CD4-positive, alpha-beta memory T cell (primary cell): ENCODE measurements at regions of chr19 and their contacts with region 1.

Region 1: DNA sequence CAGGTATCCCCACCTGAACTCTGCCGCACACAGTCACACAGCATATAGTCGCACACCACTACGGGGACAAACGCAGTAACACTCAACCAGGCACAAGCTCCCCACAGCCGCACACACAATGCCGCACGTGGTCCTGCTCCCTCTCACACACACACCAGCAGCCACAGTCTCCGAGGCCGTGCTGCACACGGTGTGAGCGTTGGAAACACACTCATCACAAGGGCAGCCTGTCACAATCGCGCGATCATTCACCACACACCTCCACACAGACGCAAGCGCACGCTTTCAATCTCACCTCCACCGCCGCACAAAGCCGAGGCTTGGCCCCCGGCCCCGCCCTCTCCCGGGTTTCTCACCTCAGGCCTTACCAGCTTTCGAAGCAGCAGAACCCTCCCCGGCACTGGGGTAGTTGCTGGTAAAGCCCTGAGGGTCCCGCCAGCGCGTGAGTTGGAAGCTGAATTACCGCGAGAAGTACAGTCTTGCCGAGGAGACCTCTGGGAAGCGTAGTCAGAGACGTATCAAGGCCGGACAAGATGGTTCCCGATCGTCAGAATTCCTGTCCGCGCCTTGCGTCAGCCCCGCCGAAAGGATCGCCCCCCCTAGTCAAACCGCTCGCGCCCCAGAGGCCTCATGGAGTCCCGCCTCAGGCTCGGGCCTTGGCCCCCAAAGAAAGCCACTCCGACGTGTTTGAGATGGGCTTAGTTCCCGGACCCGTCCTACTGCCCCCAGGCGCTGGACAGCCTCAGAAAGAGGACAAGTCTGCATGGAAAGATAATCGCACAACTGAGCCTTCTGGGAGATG is at the start of gene ZNF566:
- DNase-seq: peak; percentile 94 to 98 (median 96)
- H3K4me3 ChIP-seq: peak within 1 kb of the TSS; percentile 92 to 99
- H3K4me3 Mint-ChIP-seq: peak within 1 kb of the TSS; percentile 97 to 100 (median 98)
- H3K27ac ChIP-seq: peak within 1 kb of the TSS; percentile 93
- H3K27ac Mint-ChIP-seq: peak within 1 kb of the TSS; percentile 98 to 99 (median 98)
- H3K4me1 ChIP-seq: peaks cover 24% of the 10 kb centered on the region
- H3K4me1 Mint-ChIP-seq: peaks cover 22 to 36% (median 28%) of the 10 kb centered on the region in 4 donors
- H3K27me3 ChIP-seq: no peaks in the 10 kb centered on the region
- H3K27me3 Mint-ChIP-seq: no peaks in the 10 kb centered on the region
- total RNA-seq, gene ZNF566: 25.9 to 30.6 TPM

Region 2: GRCh38 chr19:36132489-36132891 is 356.8 kb before region 1 on chr19:
- CTCF ChIA-PET with region 1: interaction called, 3 read pairs
- POLR2A ChIA-PET with region 1: interaction called, 4 read pairs
- intact Hi-C with region 1: loop called (anchors 2 kb)
- DNase-seq: peak in 2 of 5 donors; percentile 14 to 54
- H3K4me3 ChIP-seq: no peak overlapping the region
- H3K4me3 Mint-ChIP-seq: peak overlapping the region in 4 of 8 donors; percentile 40 to 59 (median 54)
- H3K27ac ChIP-seq: no peak overlapping the region
- H3K27ac Mint-ChIP-seq: peak overlapping the region; percentile 29 to 86 (median 78)
- H3K4me1 ChIP-seq: peaks cover 32% of the 10 kb centered on the region
- H3K4me1 Mint-ChIP-seq: peaks cover 15 to 50% (median 29%) of the 10 kb centered on the region in 4 donors
- H3K27me3 ChIP-seq: no peaks in the 10 kb centered on the region
- H3K27me3 Mint-ChIP-seq: no peaks in the 10 kb centered on the region

Region 3: GRCh38 chr19:36378625-36379509 is 110.5 kb before region 1 on chr19 and contains the start of gene ZFP14:
- CTCF ChIA-PET with region 1: interaction called, 3 read pairs
- POLR2A ChIA-PET with region 1: interaction called, 15 read pairs
- intact Hi-C with region 1: loop called (anchors 1 kb)
- DNase-seq: peak; percentile 92 to 96 (median 95)
- H3K4me3 ChIP-seq: peak within 1 kb of the TSS; percentile 76 to 87
- H3K4me3 Mint-ChIP-seq: peak within 1 kb of the TSS; percentile 87 to 96 (median 94)
- H3K27ac ChIP-seq: peak within 1 kb of the TSS; percentile 76
- H3K27ac Mint-ChIP-seq: peak within 1 kb of the TSS; percentile 81 to 97 (median 93)
- H3K4me1 ChIP-seq: peaks cover 18% of the 10 kb centered on the region
- H3K4me1 Mint-ChIP-seq: peaks cover 13 to 34% (median 18%) of the 10 kb centered on the region in 4 donors
- H3K27me3 ChIP-seq: no peaks in the 10 kb centered on the region
- H3K27me3 Mint-ChIP-seq: no peaks in the 10 kb centered on the region
- total RNA-seq, gene ZFP14: 20.7 to 21.2 TPM

Region 4: DNA sequence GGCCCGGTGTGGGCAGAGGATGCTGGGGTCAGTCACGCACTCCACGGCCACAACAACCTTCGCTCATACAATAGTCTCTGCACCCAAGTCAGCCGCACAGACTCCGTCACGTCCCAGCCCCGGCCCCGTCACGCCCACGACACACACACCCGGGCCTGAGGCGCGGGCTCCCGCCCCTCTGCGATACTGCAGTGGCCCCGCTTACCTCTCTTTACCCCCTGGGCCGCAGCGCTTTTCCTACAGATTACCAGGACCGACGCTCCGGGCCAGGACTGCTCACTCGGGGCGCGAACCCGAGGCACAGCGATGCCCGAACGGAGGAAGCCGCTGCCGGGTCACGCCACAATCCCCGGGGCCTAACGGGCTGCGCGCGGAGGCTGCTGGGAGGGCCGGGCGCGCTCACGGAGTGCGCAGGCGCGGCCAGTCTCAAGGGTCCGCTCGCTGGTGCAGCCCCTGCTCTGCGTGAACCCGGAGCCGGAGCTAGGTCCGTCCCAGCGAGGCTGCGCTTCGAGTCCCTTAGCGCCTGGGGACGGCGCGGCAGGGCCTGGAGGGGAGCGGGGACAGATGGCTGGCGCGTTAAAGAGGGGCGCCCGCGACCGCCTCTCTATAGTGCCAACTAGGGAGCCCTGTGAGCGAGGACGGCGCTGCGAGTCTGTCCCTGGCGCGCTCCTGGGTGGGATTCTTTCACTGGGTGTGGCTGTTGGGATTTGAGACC is 70.9 kb before region 1 on chr19 and contains the start of gene ZFP82:
- CTCF ChIA-PET with region 1: interaction called, 4 read pairs
- POLR2A ChIA-PET with region 1: interaction called, 3 read pairs
- intact Hi-C with region 1: loop called (anchors 1 kb)
- DNase-seq: peak; percentile 47 to 81 (median 76)
- H3K4me3 ChIP-seq: peak within 1 kb of the TSS; percentile 71 to 82
- H3K4me3 Mint-ChIP-seq: peak within 1 kb of the TSS; percentile 81 to 93 (median 92)
- H3K27ac ChIP-seq: peak within 1 kb of the TSS; percentile 73
- H3K27ac Mint-ChIP-seq: peak within 1 kb of the TSS; percentile 78 to 97 (median 96)
- H3K4me1 ChIP-seq: peaks cover 15% of the 10 kb centered on the region
- H3K4me1 Mint-ChIP-seq: peaks cover 11 to 28% (median 20%) of the 10 kb centered on the region in 4 donors
- H3K27me3 ChIP-seq: no peaks in the 10 kb centered on the region
- H3K27me3 Mint-ChIP-seq: peaks cover 9 to 19% of the 10 kb centered on the region in 2 donors
- total RNA-seq, gene ZFP82: 8.2 to 8.6 TPM

Region 5: DNA sequence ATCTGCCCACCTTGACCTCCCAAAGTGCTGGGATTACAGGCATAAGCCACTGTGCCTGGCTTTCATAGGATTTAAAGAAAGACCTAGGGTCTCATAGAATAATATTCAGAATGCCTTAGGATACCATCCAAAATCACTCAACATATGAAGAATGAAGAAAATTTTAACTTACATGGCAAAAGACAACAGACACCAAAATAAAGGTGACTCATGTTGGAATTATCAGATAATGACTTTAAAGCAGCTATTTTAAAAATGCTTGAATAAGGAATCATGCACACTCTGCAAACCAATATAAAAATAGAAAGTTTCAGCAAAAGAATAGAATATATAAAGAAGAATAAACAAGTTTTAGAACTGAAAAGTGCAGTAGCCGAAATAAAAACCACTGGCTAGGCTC is 29.3 kb before region 1 on chr19:
- CTCF ChIA-PET with region 1: no interaction called
- POLR2A ChIA-PET with region 1: no interaction called
- intact Hi-C with region 1: no loop called
- DNase-seq: no peak
- H3K4me3 ChIP-seq: no peak overlapping the region
- H3K4me3 Mint-ChIP-seq: no peak overlapping the region
- H3K27ac ChIP-seq: no peak overlapping the region
- H3K27ac Mint-ChIP-seq: no peak overlapping the region
- H3K4me1 ChIP-seq: no peaks in the 10 kb centered on the region
- H3K4me1 Mint-ChIP-seq: no peaks in the 10 kb centered on the region
- H3K27me3 ChIP-seq: no peaks in the 10 kb centered on the region
- H3K27me3 Mint-ChIP-seq: no peaks in the 10 kb centered on the region

Region 6: GRCh38 chr19:36573020-36573885 is 83.9 kb after region 1 on chr19 and contains the start of gene ZNF529:
- CTCF ChIA-PET with region 1: no interaction called
- POLR2A ChIA-PET with region 1: interaction called, 21 read pairs
- intact Hi-C with region 1: loop called (anchors 1 kb)
- DNase-seq: peak; percentile 86 to 98 (median 89)
- H3K4me3 ChIP-seq: peak within 1 kb of the TSS; percentile 70 to 86
- H3K4me3 Mint-ChIP-seq: peak within 1 kb of the TSS; percentile 89 to 98 (median 96)
- H3K27ac ChIP-seq: peak within 1 kb of the TSS; percentile 95
- H3K27ac Mint-ChIP-seq: peak within 1 kb of the TSS; percentile 93 to 100 (median 98)
- H3K4me1 ChIP-seq: peaks cover 22% of the 10 kb centered on the region
- H3K4me1 Mint-ChIP-seq: peaks cover 25 to 39% (median 34%) of the 10 kb centered on the region in 4 donors
- H3K27me3 ChIP-seq: no peaks in the 10 kb centered on the region
- H3K27me3 Mint-ChIP-seq: no peaks in the 10 kb centered on the region
- total RNA-seq, gene ZNF529: 32.8 to 33.5 TPM

Region 7: GRCh38 chr19:36652958-36653357 is 163.6 kb after region 1 on chr19:
- CTCF ChIA-PET with region 1: no interaction called
- POLR2A ChIA-PET with region 1: no interaction called
- intact Hi-C with region 1: no loop called
- DNase-seq: no peak
- H3K4me3 ChIP-seq: no peak overlapping the region
- H3K4me3 Mint-ChIP-seq: no peak overlapping the region
- H3K27ac ChIP-seq: no peak overlapping the region
- H3K27ac Mint-ChIP-seq: peak overlapping the region in 1 of 7 donors; percentile 42
- H3K4me1 ChIP-seq: no peaks in the 10 kb centered on the region
- H3K4me1 Mint-ChIP-seq: no peaks in the 10 kb centered on the region
- H3K27me3 ChIP-seq: no peaks in the 10 kb centered on the region
- H3K27me3 Mint-ChIP-seq: no peaks in the 10 kb centered on the region

Region 8: DNA sequence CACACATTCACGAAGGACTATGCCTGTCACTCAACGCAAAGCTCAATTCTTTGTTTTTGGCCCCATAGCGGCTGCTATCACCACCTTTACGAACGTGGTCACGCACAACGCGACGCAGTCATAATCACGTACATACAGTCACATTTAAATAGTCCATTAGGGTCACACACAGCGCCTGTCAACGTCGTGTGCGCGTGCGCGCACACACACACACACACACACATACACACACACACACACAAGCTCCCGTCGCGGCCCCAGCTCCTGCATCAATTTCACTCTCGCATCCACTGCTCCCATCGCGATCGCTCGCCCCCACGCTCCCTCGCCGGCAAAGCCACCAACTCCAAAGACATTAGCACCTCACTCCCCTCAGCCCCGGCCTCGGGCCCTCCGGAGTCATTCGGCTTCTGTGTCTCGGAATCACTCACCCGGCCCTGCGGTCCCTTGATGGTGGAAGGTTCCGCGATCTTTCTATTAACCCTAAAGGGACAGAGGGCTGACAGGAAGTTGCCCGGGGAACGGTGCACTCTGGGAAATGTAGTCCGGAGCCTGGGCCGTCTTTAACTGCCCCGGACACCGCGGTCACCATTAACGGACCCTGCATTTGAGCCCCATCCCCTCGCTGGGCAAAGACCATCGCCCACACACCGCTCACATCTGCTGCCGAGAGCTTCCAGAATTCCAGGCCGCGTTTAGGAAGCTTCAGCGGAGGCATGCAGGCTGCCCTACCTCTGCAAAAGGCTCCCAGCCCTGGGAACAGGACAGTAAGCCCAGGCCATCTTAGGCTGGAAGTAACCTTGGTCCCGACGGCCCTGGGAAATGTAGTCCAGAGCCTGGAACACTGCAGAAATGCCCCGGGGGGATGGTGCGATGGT is 348.8 kb after region 1 on chr19 and contains the start of gene ZNF790:
- CTCF ChIA-PET with region 1: no interaction called
- POLR2A ChIA-PET with region 1: interaction called, 3 read pairs
- intact Hi-C with region 1: loop called (anchors 1 kb)
- DNase-seq: peak; percentile 88 to 94 (median 91)
- H3K4me3 ChIP-seq: peak within 1 kb of the TSS; percentile 48 to 97
- H3K4me3 Mint-ChIP-seq: peak within 1 kb of the TSS in 4 of 8 donors; percentile 31 to 71 (median 44)
- H3K27ac ChIP-seq: peak within 1 kb of the TSS; percentile 73
- H3K27ac Mint-ChIP-seq: peak within 1 kb of the TSS in 2 of 7 donors; percentile 45 to 54
- H3K4me1 ChIP-seq: peaks cover 18% of the 10 kb centered on the region
- H3K4me1 Mint-ChIP-seq: peaks cover 0 to 13% (median 5%) of the 10 kb centered on the region in 4 donors
- H3K27me3 ChIP-seq: no peaks in the 10 kb centered on the region
- H3K27me3 Mint-ChIP-seq: no peaks in the 10 kb centered on the region
- total RNA-seq, gene ZNF790: 12.4 to 13.4 TPM